ENCODE measurements at regions of chr15 and their contacts with region 1.

Region 1: GRCh38 chr15:44584162-44584749 is 47.3 kb downstream of the EIF3J start:
- DNase-seq: peak in 34 of 35 experiments; percentile 9 to 70 (median 44)
- ATAC-seq: peak; percentile 82 to 90 (median 84)
- H3K4me3 ChIP-seq: no peak overlapping the region
- H3K4me3 Mint-ChIP-seq: no peak overlapping the region
- H3K27ac ChIP-seq: no peak overlapping the region
- H3K27ac Mint-ChIP-seq: peak overlapping the region; percentile 17 to 72
- H3K4me1 ChIP-seq: peaks cover 0 to 1% of the 10 kb centered on the region in 2 experiments
- H3K4me1 Mint-ChIP-seq: peaks cover 8 to 22% (median 13%) of the 10 kb centered on the region in 3 donors
- H3K27me3 ChIP-seq: no peaks in the 10 kb centered on the region
- H3K27me3 Mint-ChIP-seq: no peaks in the 10 kb centered on the region

Region 2: DNA sequence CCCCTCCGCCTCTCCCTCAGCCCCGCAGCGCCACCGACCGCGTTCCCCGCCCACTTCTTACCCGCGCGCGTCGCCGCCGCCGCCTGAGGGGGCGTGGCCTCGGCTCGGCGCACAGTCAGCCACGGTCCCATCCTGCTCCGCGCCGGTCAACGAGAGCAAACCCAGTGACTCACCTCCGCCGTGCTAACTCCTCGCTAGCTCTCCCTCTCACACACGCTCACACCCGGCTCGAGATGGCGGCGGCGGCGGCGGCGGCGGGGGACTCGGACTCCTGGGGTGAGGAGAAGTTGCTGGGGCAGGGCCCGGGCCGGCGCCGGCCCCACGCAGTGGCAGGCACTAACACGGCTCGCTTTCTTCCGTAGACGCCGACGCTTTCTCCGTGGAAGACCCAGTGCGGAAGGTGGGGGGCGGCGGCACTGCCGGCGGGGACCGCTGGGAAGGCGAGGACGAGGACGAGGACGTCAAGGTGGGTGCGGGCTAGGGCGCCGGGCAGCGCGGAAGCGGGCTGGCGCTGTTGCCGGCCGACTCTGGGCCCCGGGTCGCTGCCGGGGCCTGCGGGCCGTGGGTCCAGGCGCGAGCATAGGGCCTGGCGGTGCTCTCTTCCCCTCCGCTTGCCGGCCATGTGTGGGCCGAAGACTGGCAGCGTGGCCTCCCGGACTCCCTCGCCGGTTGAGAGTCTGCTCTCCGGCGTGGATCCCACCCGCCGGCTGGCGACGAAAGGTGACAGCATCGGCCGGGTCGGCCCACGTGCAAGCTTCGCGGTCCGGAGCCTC is 47.1 kb before region 1 on chr15 and contains the start of gene EIF3J:
- CTCF ChIA-PET with region 1: interaction called in 1 of 2 experiments, 4 read pairs
- POLR2A ChIA-PET with region 1: interaction called, 3 to 10 read pairs
- DNase-seq: peak; percentile 85 to 98 (median 92)
- ATAC-seq: peak; percentile 90 to 95 (median 92)
- H3K4me3 ChIP-seq: peak within 1 kb of the TSS; percentile 90 to 91
- H3K4me3 Mint-ChIP-seq: peak within 1 kb of the TSS; percentile 83 to 92 (median 85)
- H3K27ac ChIP-seq: peak within 1 kb of the TSS; percentile 81
- H3K27ac Mint-ChIP-seq: peak within 1 kb of the TSS; percentile 88 to 91
- H3K4me1 ChIP-seq: peaks cover 17 to 27% of the 10 kb centered on the region in 2 experiments
- H3K4me1 Mint-ChIP-seq: peaks cover 54 to 58% (median 55%) of the 10 kb centered on the region in 3 donors
- H3K27me3 ChIP-seq: no peaks in the 10 kb centered on the region
- H3K27me3 Mint-ChIP-seq: no peaks in the 10 kb centered on the region
- total RNA-seq, gene EIF3J: 58.2 to 68.3 (median 64.4) TPM

Region 3: GRCh38 chr15:44545913-44546802 is 38.1 kb before region 1 on chr15:
- CTCF ChIA-PET with region 1: interaction called, 4 to 14 read pairs
- POLR2A ChIA-PET with region 1: no interaction called
- DNase-seq: peak in 3 of 35 experiments; percentile 9 to 48 (median 12)
- ATAC-seq: peak; percentile 65 to 70 (median 66)
- H3K4me3 ChIP-seq: no peak overlapping the region
- H3K4me3 Mint-ChIP-seq: peak overlapping the region; percentile 11 to 46 (median 14)
- H3K27ac ChIP-seq: peak overlapping the region; percentile 48
- H3K27ac Mint-ChIP-seq: peak overlapping the region; percentile 53 to 66
- H3K4me1 ChIP-seq: peaks cover 6 to 28% of the 10 kb centered on the region in 2 experiments
- H3K4me1 Mint-ChIP-seq: peaks cover 63 to 72% (median 68%) of the 10 kb centered on the region in 3 donors
- H3K27me3 ChIP-seq: no peaks in the 10 kb centered on the region
- H3K27me3 Mint-ChIP-seq: no peaks in the 10 kb centered on the region

Region 4: GRCh38 chr15:44598892-44599291 is 14.6 kb after region 1 on chr15:
- CTCF ChIA-PET with region 1: no interaction called
- POLR2A ChIA-PET with region 1: no interaction called
- DNase-seq: no peak
- ATAC-seq: no peak
- H3K4me3 ChIP-seq: no peak overlapping the region
- H3K4me3 Mint-ChIP-seq: no peak overlapping the region
- H3K27ac ChIP-seq: peak overlapping the region; percentile 18
- H3K27ac Mint-ChIP-seq: peak overlapping the region; percentile 80 to 89
- H3K4me1 ChIP-seq: no peaks in the 10 kb centered on the region
- H3K4me1 Mint-ChIP-seq: peaks cover 16 to 28% (median 18%) of the 10 kb centered on the region in 3 donors
- H3K27me3 ChIP-seq: no peaks in the 10 kb centered on the region
- H3K27me3 Mint-ChIP-seq: no peaks in the 10 kb centered on the region

Region 5: DNA sequence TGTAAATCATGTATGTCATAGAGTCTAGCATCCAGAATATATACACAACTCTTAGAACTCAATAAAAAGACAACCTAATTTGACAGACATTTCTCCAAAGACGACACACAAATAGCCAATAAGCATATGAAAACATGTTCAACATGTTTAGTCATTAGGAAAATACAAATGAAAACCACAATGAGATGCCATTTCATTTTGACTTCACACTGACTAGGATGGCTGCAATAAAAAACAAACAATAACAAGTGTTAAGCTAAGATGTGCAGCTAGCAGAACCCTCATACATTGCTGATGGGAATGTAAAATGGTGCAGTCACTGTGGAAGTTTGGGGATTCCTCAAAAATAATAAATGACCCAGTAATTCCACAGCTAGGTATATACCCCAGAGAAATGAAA is 62.8 kb after region 1 on chr15:
- CTCF ChIA-PET with region 1: interaction called in 1 of 2 experiments, 10 read pairs
- POLR2A ChIA-PET with region 1: no interaction called
- DNase-seq: no peak
- ATAC-seq: no peak
- H3K4me3 ChIP-seq: no peak overlapping the region
- H3K4me3 Mint-ChIP-seq: no peak overlapping the region
- H3K27ac ChIP-seq: no peak overlapping the region
- H3K27ac Mint-ChIP-seq: peak overlapping the region; percentile 34 to 50
- H3K4me1 ChIP-seq: peaks cover 3 to 10% of the 10 kb centered on the region in 2 experiments
- H3K4me1 Mint-ChIP-seq: peaks cover 60 to 66% (median 64%) of the 10 kb centered on the region in 3 donors
- H3K27me3 ChIP-seq: no peaks in the 10 kb centered on the region
- H3K27me3 Mint-ChIP-seq: no peaks in the 10 kb centered on the region

Region 6: DNA sequence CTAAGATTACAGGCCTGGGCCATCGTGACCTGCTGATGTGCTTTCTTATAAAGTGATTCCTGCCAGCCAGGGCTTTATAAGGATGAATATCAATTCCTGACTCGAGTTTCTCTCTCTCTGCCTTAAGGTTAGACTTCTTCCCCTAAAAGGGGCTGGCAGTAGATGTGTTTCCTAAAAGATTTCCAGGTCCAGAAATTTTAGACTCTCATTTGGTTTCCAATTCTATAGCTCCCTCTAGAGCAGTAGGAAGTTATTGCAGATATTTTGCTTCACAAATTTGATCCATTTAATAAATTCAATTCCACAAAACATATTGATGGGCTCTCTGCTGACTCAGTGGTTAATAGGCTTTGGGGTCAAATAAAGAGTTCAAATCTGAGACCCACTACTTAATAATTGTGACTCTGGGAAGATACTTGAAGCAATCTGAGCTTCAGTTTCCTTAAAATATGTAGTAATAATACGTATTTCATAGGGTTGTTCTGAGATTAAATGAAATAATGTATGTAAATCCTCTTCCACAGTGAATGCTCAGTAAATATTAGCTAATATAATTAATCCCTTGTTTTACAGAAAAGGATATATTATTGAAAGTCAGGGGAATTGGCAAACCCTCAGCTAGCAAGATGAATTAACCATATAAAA is 154.2 kb after region 1 on chr15:
- CTCF ChIA-PET with region 1: interaction called in 1 of 2 experiments, 17 read pairs
- POLR2A ChIA-PET with region 1: interaction called, 4 to 6 read pairs
- DNase-seq: peak in 1 of 35 experiments; percentile 74
- ATAC-seq: no peak
- H3K4me3 ChIP-seq: no peak overlapping the region
- H3K4me3 Mint-ChIP-seq: peak overlapping the region in 2 of 3 donors; percentile 14 to 51
- H3K27ac ChIP-seq: peak overlapping the region; percentile 89
- H3K27ac Mint-ChIP-seq: peak overlapping the region; percentile 80 to 84
- H3K4me1 ChIP-seq: peaks cover 7 to 43% of the 10 kb centered on the region in 2 experiments
- H3K4me1 Mint-ChIP-seq: peaks cover 55 to 59% (median 58%) of the 10 kb centered on the region in 3 donors
- H3K27me3 ChIP-seq: no peaks in the 10 kb centered on the region
- H3K27me3 Mint-ChIP-seq: no peaks in the 10 kb centered on the region

Region 7: DNA sequence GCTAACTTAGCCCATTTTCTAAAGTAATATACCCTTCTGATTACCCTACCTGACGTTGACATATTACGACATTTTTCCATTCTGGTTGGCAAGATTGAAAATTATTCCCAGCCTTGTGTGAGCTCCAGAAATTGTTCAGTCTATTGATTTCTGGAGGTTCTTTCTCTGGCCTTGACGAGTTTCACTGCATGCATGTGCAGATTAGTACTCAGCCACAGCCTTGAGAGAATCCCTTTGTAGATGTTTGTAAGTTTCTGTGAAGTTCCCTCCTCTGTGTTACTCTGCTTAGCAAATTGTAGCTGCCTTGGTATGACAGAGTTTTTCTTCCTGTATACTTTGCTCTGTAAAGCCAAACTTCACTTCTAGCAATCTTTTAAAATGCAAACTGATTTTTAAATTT is 179.6 kb after region 1 on chr15:
- CTCF ChIA-PET with region 1: no interaction called
- POLR2A ChIA-PET with region 1: interaction called in 1 of 2 experiments, 22 read pairs
- DNase-seq: no peak
- ATAC-seq: no peak
- H3K4me3 ChIP-seq: no peak overlapping the region
- H3K4me3 Mint-ChIP-seq: no peak overlapping the region
- H3K27ac ChIP-seq: no peak overlapping the region
- H3K27ac Mint-ChIP-seq: no peak overlapping the region
- H3K4me1 ChIP-seq: no peaks in the 10 kb centered on the region
- H3K4me1 Mint-ChIP-seq: no peaks in the 10 kb centered on the region
- H3K27me3 ChIP-seq: no peaks in the 10 kb centered on the region
- H3K27me3 Mint-ChIP-seq: no peaks in the 10 kb centered on the region

Measured in T-cell (primary cell).